Natural killer cell (primary cell): ENCODE measurements at regions of chr2 and their contacts with region 1.

Region 1: GRCh38 chr2:27133905-27134780 is at the start of gene PREB:
- DNase-seq: peak; percentile 98 to 99
- ATAC-seq: peak; percentile 96 to 98 (median 97)
- H3K4me3 ChIP-seq: peak within 1 kb of the TSS; percentile 70
- H3K4me3 Mint-ChIP-seq: peak within 1 kb of the TSS; percentile 97
- H3K27ac ChIP-seq: peak within 1 kb of the TSS; percentile 71
- H3K27ac Mint-ChIP-seq: peak within 1 kb of the TSS; percentile 94 to 97
- H3K4me1 ChIP-seq: peaks cover 24% of the 10 kb centered on the region
- H3K4me1 Mint-ChIP-seq: peaks cover 18 to 30% of the 10 kb centered on the region in 2 donors
- H3K27me3 ChIP-seq: no peaks in the 10 kb centered on the region
- H3K27me3 Mint-ChIP-seq: no peaks in the 10 kb centered on the region
- CTCF ChIP-seq: no peak
- total RNA-seq, gene PREB: 24.6 to 41.5 (median 31.2) TPM

Region 2: DNA sequence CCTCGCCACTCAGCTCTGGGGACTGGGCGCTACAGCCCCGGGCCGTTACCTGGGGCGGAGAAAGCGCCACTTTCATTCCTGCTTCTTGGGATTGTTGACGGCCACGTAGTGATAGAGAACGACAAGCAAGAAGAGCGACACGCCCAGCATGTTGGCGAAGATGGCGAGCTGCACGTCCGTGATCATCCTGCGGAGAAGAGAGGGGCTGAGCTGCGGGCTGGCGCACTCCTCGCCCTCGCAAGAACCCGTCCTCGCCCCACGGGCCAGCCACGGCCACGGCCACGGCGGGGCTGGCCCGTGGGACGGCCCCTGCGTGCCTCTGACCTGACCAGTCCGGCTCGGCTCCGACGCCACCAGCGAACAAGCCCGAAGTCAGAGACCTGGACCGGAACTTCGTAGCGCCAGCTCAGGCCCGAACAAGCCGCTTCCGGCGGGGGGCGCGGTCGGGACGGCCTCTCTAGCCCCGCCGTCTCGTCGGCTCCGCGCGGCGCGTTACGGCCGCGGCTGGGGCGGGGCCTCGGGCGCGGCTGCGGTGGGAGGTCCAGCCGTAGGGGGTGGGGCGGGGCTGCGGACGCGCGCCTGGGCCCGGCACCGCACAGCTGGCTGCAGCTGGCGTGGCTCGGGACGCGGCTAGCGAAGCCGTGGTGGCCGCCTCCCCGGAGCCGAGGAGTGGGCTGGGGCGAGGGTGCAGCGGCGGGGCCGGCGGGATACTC is 62.7 kb before region 1 on chr2 and contains the start of gene OST4:
- intact Hi-C with region 1: no loop called
- DNase-seq: peak; percentile 88 to 94
- ATAC-seq: peak; percentile 90 to 97 (median 92)
- H3K4me3 ChIP-seq: peak within 1 kb of the TSS; percentile 92
- H3K4me3 Mint-ChIP-seq: peak within 1 kb of the TSS; percentile 97
- H3K27ac ChIP-seq: peak within 1 kb of the TSS; percentile 87
- H3K27ac Mint-ChIP-seq: peak within 1 kb of the TSS; percentile 90 to 93
- H3K4me1 ChIP-seq: peaks cover 49% of the 10 kb centered on the region
- H3K4me1 Mint-ChIP-seq: peaks cover 49 to 70% of the 10 kb centered on the region in 2 donors
- H3K27me3 ChIP-seq: no peaks in the 10 kb centered on the region
- H3K27me3 Mint-ChIP-seq: no peaks in the 10 kb centered on the region
- CTCF ChIP-seq: no peak
- total RNA-seq, gene OST4: 178 to 207 (median 192) TPM

Region 3: DNA sequence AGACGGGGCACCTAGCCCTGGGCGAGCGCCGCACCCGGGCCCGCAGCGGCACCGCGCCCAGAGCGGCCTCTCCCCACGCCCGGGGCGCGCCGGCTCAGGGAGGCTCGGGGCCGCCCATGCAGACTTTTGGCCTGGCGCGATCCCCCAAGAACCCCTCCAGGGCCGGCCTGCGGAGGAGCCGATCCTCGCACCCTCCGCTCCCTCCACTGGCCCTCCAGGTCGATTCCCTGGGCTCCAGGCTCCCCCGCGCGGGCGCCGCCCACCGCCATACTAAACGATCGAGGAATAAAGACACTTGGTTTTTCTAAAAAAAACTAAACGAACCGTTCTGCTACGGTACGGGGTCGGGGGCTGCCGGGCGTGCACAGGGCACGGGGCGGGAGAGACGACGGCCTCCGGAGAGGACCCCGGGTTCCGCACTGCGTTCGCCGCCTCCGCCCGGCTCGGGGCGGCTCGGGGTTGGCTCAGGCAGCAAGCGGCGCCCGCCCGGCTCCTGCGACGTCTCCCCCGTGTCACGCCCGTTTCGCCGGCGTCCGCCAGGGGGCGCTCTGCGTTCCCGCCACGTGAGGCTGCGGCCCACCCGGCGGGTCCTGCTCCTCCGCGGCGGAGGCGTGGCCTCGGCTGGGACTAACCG is 47.9 kb before region 1 on chr2:
- intact Hi-C with region 1: loop called (anchors 10 kb)
- DNase-seq: peak; percentile 99
- ATAC-seq: peak; percentile 93 to 98 (median 96)
- H3K4me3 ChIP-seq: peak overlapping the region; percentile 65
- H3K4me3 Mint-ChIP-seq: peak overlapping the region; percentile 89
- H3K27ac ChIP-seq: peak overlapping the region; percentile 82
- H3K27ac Mint-ChIP-seq: peak overlapping the region; percentile 60 to 87
- H3K4me1 ChIP-seq: peaks cover 34% of the 10 kb centered on the region
- H3K4me1 Mint-ChIP-seq: peaks cover 23 to 29% of the 10 kb centered on the region in 2 donors
- H3K27me3 ChIP-seq: no peaks in the 10 kb centered on the region
- H3K27me3 Mint-ChIP-seq: no peaks in the 10 kb centered on the region
- CTCF ChIP-seq: peak; percentile 86

Region 4: GRCh38 chr2:27123302-27124231 is 10.6 kb before region 1 on chr2 and contains the start of gene ABHD1:
- intact Hi-C with region 1: loop called (anchors 1 kb)
- DNase-seq: peak; percentile 63 to 77
- ATAC-seq: peak; percentile 88 to 90 (median 89)
- H3K4me3 ChIP-seq: peak within 1 kb of the TSS; percentile 71
- H3K4me3 Mint-ChIP-seq: peak within 1 kb of the TSS; percentile 90
- H3K27ac ChIP-seq: peak within 1 kb of the TSS; percentile 68
- H3K27ac Mint-ChIP-seq: peak within 1 kb of the TSS; percentile 77 to 84
- H3K4me1 ChIP-seq: peaks cover 19% of the 10 kb centered on the region
- H3K4me1 Mint-ChIP-seq: peaks cover 9 to 18% of the 10 kb centered on the region in 2 donors
- H3K27me3 ChIP-seq: peaks cover 4% of the 10 kb centered on the region
- H3K27me3 Mint-ChIP-seq: peaks cover 12 to 13% of the 10 kb centered on the region in 2 donors
- CTCF ChIP-seq: no peak
- total RNA-seq, gene ABHD1: 0.88 to 2.4 (median 1.2) TPM

Region 5: DNA sequence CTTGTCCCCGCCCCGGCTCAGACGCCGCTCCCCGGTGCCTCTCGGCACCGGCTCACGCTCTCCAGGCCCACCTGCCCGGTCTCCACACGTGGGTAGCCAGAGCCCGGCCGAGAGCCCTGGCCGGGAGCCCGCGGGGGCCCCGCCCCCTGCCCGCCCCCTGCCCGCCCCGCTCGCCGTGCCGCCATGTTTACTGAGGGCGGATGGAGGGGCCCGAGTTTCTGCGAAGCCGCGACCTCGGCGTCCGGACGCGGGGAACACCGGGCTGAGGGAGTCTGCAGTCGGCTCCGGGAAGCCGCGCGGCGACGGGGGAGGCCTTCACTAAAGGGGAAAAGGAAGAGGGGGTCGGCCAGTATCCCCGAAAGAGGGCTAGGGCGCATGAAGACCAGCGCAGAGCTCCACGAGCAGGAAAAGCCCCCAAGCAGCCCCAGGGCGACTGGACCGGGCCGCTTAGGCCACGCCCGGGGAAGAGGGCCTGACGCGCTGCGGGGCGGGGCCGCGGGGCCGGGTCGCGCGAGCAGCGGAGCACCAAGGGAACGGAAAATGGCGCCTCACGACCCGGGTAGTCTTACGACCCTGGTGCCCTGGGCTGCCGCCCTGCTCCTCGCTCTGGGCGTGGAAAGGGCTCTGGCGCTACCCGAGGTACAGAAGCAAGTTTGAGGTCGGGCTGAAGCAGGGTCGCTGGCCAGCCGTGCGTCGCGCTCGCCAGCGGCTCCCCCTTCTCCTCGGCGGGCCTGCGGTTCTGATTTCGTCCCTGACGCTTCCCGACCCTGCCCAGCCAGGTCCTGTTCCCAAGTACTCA is 77.9 kb after region 1 on chr2 and contains the starts of genes ATRAID and SLC5A6:
- intact Hi-C with region 1: loop called (anchors 1 kb)
- DNase-seq: peak; percentile 92 to 94
- ATAC-seq: peak; percentile 89 to 96 (median 89)
- H3K4me3 ChIP-seq: peak within 1 kb of the TSS; percentile 81
- H3K4me3 Mint-ChIP-seq: peak within 1 kb of the TSS; percentile 100
- H3K27ac ChIP-seq: peak within 1 kb of the TSS; percentile 97
- H3K27ac Mint-ChIP-seq: peak within 1 kb of the TSS; percentile 99 to 100
- H3K4me1 ChIP-seq: peaks cover 19% of the 10 kb centered on the region
- H3K4me1 Mint-ChIP-seq: peaks cover 26 to 42% of the 10 kb centered on the region in 2 donors
- H3K27me3 ChIP-seq: no peaks in the 10 kb centered on the region
- H3K27me3 Mint-ChIP-seq: no peaks in the 10 kb centered on the region
- CTCF ChIP-seq: no peak
- total RNA-seq, gene ATRAID: 65.5 to 76.6 (median 76.5) TPM
- total RNA-seq, gene SLC5A6: 86.2 to 102 (median 93.7) TPM